ENCODE measurements at regions of chr2 and their contacts with region 1.

Region 1: DNA sequence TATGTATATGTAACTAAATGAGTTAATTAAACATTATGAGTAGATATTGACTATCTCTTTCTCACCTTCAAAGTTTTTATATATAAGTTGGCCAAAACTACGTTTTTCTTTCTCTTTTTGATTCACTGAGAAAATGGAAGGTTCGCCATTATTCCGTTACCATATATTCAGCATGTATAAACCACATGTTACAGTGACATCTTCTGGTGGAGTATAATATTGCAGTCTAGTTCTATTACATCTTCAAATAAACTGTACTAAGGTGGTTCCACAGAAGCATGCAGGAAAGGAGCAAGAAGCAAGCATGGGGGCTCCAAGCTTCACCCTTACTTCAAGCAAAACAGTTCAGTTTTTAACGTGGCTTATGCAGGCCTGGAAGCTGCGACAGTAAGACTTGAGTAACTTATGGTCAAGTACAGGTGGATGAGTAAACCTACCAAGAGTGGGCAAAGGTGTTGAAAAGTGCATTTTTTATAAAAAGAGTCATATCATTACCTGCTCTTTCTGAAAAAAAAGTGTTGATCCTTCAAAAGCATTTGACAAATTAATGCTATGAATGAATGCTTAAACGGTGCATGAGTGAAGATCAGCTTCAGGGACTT is 129.8 kb upstream of the RAB6C start:
- DNase-seq: peak; percentile 69
- H3K4me3 ChIP-seq: no peak overlapping the region
- H3K27ac ChIP-seq: no peak overlapping the region
- H3K4me1 ChIP-seq: no peaks in the 10 kb centered on the region
- CTCF ChIP-seq: peak; percentile 90

Region 2: DNA sequence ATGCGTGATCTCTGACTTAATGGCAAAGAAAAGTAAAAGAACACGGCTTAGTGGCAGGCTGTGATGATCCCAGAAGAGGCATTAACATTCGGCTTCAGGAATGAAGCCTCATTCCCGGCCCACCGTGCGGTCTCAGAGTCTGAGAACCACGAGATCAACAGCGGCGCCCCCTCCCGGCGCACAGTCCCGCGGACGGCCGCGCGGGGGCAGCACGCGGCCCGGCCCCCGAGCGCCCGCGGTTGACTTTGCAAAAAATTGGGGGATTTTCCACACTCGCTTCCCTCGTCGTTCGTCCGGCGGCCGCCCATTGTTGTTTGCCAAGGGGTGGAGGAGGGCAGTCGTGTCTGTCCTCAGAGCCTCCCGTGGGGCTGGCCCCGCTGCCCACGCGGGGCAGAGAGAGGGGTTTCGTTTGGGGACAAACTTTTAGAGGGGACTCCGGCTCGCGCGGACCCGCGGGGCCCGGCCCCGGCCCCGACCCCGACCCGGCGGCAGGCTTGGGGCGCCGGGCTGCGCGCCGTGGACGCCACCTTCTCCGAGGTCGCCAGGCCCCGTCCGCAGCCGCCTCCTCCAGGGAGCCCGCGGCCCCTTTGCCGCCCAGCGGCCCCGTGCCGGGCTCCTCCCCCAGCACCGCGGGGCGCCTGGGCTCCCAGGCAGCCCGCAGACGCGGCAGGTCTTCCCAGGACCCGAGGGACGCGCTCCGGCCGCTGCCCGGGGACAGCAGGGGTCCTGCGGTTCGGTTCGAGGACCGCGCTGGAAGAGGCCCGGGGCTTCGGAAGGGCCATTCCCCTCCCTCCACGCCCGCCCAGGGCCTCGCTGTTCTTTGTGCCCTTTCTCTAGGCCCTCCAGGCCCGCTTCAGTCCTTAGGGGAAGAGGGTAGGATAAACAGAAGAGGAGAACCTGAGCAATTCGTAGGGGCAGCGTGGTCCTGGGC is 1527.6 kb before region 1 on chr2:
- CTCF ChIA-PET with region 1: no interaction called
- POLR2A ChIA-PET with region 1: no interaction called
- intact Hi-C with region 1: loop called (anchors 5 kb)
- DNase-seq: peak; percentile 78
- H3K4me3 ChIP-seq: peak overlapping the region; percentile 67
- H3K27ac ChIP-seq: no peak overlapping the region
- H3K4me1 ChIP-seq: peaks cover 3% of the 10 kb centered on the region
- CTCF ChIP-seq: peak; percentile 85

Region 3: DNA sequence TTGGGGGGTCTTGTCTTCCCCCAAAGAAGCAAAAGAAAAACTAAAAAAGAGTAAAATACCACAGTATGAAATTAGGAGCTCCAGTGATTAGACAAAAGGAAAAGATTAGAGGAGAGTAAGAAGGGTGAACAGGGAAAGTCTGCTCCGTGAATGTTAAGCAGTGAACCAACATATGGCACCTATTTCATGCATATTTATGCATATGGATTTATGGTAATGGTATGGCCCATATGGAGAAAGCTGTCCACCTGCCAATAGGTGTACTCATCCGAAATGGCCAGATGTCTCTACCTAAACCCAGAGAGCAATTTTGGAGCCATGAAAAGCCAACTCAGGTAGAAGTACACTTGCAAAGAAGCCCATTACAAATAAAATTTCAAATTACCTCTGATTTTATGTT is 274.2 kb before region 1 on chr2:
- CTCF ChIA-PET with region 1: no interaction called
- POLR2A ChIA-PET with region 1: no interaction called
- intact Hi-C with region 1: no loop called
- DNase-seq: no peak
- H3K4me3 ChIP-seq: no peak overlapping the region
- H3K27ac ChIP-seq: no peak overlapping the region
- H3K4me1 ChIP-seq: no peaks in the 10 kb centered on the region
- CTCF ChIP-seq: no peak

Region 4: DNA sequence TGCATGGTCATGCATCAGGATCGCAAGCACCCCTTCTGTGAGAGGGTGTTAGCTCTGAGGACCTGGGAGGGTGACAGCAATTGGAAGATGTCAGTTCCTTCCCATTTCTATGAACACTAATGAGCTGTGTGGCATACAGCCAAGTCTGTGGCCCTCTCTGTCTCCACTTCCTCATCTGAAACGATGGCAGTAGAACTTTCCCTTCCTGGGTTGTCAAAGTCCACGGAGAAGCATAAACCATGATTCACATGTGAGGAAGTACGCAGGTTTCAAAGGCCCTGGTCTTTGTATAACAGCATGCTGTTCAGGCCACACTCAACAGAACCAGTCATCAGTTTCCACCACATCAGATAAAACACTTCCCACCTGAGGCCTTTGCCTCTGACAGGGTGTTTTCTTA is 37.6 kb before region 1 on chr2:
- CTCF ChIA-PET with region 1: no interaction called
- POLR2A ChIA-PET with region 1: no interaction called
- intact Hi-C with region 1: no loop called
- DNase-seq: peak; percentile 20
- H3K4me3 ChIP-seq: no peak overlapping the region
- H3K27ac ChIP-seq: no peak overlapping the region
- H3K4me1 ChIP-seq: no peaks in the 10 kb centered on the region
- CTCF ChIP-seq: no peak

Region 5: GRCh38 chr2:129877289-129877779 is 27.7 kb after region 1 on chr2:
- CTCF ChIA-PET with region 1: no interaction called
- POLR2A ChIA-PET with region 1: no interaction called
- intact Hi-C with region 1: no loop called
- DNase-seq: peak; percentile 70
- H3K4me3 ChIP-seq: peak overlapping the region; percentile 60
- H3K27ac ChIP-seq: no peak overlapping the region
- H3K4me1 ChIP-seq: no peaks in the 10 kb centered on the region
- CTCF ChIP-seq: no peak

Region 6: GRCh38 chr2:129936334-129936934 is 86.8 kb after region 1 on chr2:
- CTCF ChIA-PET with region 1: no interaction called
- POLR2A ChIA-PET with region 1: no interaction called
- intact Hi-C with region 1: no loop called
- DNase-seq: no peak
- H3K4me3 ChIP-seq: no peak overlapping the region
- H3K27ac ChIP-seq: no peak overlapping the region
- H3K4me1 ChIP-seq: no peaks in the 10 kb centered on the region
- CTCF ChIP-seq: no peak